CD4-positive, alpha-beta T cell (primary cell): ENCODE measurements at regions of chr21 and their contacts with region 1.

Region 1: DNA sequence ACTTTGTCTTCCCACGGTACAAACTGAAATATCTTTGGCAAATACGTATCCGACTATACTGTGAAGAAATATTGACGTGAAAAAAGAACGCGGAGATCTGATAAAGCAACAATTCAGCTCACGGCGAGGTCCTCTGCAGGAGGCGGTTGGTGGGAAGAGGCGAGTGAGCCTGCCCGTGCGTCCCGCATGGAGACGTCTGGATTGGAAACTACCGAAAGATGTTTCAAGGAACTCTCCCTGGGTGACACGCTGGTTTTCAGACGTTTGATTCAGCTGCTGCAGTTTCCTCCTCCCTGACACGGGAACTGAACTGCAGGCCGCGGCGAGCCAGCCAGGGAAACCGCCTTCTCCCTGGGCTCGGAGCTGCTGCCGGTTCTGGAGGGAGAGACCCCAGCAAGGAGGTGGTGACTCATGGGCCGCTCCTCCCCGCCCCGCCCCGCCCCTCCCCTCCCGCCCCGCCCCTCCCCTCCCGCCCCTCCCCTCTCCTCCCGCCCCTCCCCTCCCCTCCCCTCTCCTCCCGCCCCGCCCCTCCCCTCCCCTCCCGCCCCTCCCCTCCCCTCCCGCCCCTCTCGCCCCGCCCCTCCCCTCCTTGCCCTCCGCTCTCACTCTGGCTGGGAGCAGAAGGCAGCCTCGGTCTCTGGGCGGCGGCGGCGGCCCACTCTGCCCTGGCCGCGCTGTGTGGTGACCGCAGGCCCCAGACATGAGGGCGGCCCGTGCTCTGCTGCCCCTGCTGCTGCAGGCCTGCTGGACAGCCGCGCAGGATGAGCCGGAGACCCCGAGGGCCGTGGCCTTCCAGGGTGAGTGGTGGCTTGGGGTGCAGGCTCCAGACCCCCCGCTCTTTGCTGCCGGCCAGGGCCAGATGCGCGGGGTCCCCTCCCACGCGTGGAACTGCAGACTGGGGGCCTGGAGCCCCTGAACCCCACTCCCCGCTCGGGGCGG is at the start of gene COL6A1:
- DNase-seq: peak; percentile 36 to 85 (median 54)
- ATAC-seq: peak; percentile 79
- H3K4me3 ChIP-seq: peak within 1 kb of the TSS; percentile 59
- H3K4me3 Mint-ChIP-seq: peak within 1 kb of the TSS; percentile 76
- H3K27ac ChIP-seq: no peak within 1 kb of the TSS
- H3K27ac Mint-ChIP-seq: no peak within 1 kb of the TSS
- H3K4me1 ChIP-seq: peaks cover 32% of the 10 kb centered on the region
- H3K4me1 Mint-ChIP-seq: peaks cover 5% of the 10 kb centered on the region
- H3K27me3 ChIP-seq: peaks cover 5 to 6% of the 10 kb centered on the region in 2 experiments
- H3K27me3 Mint-ChIP-seq: peaks cover 6% of the 10 kb centered on the region
- CTCF ChIP-seq: no peak
- total RNA-seq, gene COL6A1: 8.0 to 8.5 TPM

Region 2: DNA sequence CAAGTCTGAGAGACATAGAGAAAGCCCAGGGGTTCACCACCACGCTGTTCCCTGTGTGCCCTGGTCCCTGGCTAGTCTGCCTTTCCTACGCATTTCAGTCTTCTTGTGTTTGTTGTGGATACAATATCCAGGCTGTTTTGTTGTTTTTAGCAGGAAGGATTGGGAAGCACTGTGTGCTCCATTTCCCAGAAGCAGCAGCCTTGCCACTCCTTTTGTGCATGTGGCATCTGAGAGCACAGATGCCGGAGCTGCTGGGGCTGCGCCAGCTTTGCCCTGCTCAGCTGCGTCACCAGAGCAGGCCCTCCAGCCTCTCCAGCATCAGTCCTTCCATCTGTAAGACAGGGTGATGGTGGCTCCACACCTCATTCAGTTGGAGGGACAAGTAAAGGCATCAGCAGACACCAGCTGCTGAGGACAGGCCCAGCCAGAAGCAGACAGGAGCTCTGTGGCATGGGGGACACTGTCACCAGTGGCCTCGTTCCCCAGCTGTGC is 94.3 kb before region 1 on chr21:
- CTCF ChIA-PET with region 1: no interaction called
- POLR2A ChIA-PET with region 1: no interaction called
- intact Hi-C with region 1: loop called in 1 of 2 experiments (anchors 5 kb)
- DNase-seq: peak in 1 of 14 experiments; percentile 3
- ATAC-seq: no peak
- H3K4me3 ChIP-seq: no peak overlapping the region
- H3K4me3 Mint-ChIP-seq: peak overlapping the region; percentile 40
- H3K27ac ChIP-seq: peak overlapping the region in 1 of 2 donors; percentile 23
- H3K27ac Mint-ChIP-seq: peak overlapping the region; percentile 81
- H3K4me1 ChIP-seq: peaks cover 72% of the 10 kb centered on the region
- H3K4me1 Mint-ChIP-seq: peaks cover 96% of the 10 kb centered on the region
- H3K27me3 ChIP-seq: no peaks in the 10 kb centered on the region
- H3K27me3 Mint-ChIP-seq: no peaks in the 10 kb centered on the region
- CTCF ChIP-seq: no peak